ENCODE measurements at regions of chr1 and their contacts with region 1.

Region 1: GRCh38 chr1:8026153-8026975 is at the start of gene ERRFI1:
- DNase-seq: peak; percentile 95
- H3K4me3 ChIP-seq: peak within 1 kb of the TSS; percentile 68 to 92 (median 90)
- H3K27ac ChIP-seq: peak within 1 kb of the TSS; percentile 92 to 96 (median 94)
- H3K4me1 ChIP-seq: peaks cover 13 to 71% (median 41%) of the 10 kb centered on the region in 4 donors
- H3K27me3 ChIP-seq: no peaks in the 10 kb centered on the region
- CTCF ChIP-seq: peak in 1 of 5 experiments; percentile 4
- EP300 ChIP-seq: no peak
- POLR2A ChIP-seq: peak; percentile 95
- total RNA-seq, gene ERRFI1: 10.0 to 101 (median 70.0) TPM

Region 2: GRCh38 chr1:7733276-7733675 is 293.1 kb before region 1 on chr1:
- in situ Hi-C with region 1: no loop called
- intact Hi-C with region 1: no loop called
- DNase-seq: no peak
- H3K4me3 ChIP-seq: no peak overlapping the region
- H3K27ac ChIP-seq: no peak overlapping the region
- H3K4me1 ChIP-seq: no peaks in the 10 kb centered on the region
- H3K27me3 ChIP-seq: no peaks in the 10 kb centered on the region
- CTCF ChIP-seq: no peak
- EP300 ChIP-seq: no peak
- POLR2A ChIP-seq: no peak

Region 3: DNA sequence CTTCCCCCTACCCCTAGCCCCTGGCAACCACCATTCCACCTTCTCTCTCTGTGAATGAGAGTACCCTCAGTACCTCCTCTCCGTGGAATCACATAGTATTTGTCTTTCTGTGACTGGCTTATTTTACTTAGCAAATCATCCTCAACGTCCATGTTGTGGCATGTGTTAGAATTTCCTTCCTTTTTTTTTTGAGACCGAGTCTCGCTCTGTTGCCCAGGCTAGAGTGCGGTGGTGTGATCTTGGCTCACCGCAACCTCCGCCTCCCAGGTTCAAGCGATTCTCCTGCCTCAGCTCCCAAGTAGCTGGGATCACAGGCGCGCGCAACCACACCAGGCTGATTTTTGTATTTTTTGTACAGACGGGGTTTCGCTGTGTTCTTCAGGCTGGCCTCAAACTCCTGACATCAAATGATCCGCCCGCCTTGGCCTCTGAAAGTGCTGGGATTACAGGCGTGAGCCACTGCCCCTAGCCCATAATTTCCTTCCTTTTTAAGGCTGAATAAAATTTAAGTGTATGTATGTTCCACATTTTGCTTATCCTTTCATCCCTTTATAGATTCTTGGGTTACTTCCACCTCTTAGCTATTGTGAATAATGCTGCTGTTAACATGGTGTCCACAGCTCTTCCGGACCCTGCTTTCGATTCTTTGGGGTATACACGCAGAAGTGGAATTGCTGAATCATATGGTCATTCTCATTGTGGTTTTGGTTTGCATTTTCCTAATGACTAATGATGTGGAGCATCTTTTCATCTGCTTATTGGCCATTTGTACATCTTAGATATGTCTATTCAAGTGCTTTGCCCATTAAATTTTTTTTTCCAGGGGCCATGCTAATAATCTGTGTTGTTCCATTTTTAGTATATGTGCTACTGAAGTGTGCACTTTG is 32.5 kb before region 1 on chr1:
- in situ Hi-C with region 1: no loop called
- intact Hi-C with region 1: no loop called
- DNase-seq: no peak
- H3K4me3 ChIP-seq: no peak overlapping the region
- H3K27ac ChIP-seq: no peak overlapping the region
- H3K4me1 ChIP-seq: no peaks in the 10 kb centered on the region
- H3K27me3 ChIP-seq: no peaks in the 10 kb centered on the region
- CTCF ChIP-seq: no peak
- EP300 ChIP-seq: no peak
- POLR2A ChIP-seq: no peak

Region 4: GRCh38 chr1:8211589-8212442 is 185.5 kb after region 1 on chr1:
- in situ Hi-C with region 1: no loop called
- intact Hi-C with region 1: loop called (anchors 10 kb)
- DNase-seq: peak; percentile 26
- H3K4me3 ChIP-seq: no peak overlapping the region
- H3K27ac ChIP-seq: peak overlapping the region in 1 of 4 donors; percentile 50
- H3K4me1 ChIP-seq: peaks cover 0 to 5% (median 2%) of the 10 kb centered on the region in 4 donors
- H3K27me3 ChIP-seq: no peaks in the 10 kb centered on the region
- CTCF ChIP-seq: no peak
- EP300 ChIP-seq: no peak
- POLR2A ChIP-seq: no peak